K562 (cell line): ENCODE measurements at regions of chr7 and their contacts with region 1.

Region 1: DNA sequence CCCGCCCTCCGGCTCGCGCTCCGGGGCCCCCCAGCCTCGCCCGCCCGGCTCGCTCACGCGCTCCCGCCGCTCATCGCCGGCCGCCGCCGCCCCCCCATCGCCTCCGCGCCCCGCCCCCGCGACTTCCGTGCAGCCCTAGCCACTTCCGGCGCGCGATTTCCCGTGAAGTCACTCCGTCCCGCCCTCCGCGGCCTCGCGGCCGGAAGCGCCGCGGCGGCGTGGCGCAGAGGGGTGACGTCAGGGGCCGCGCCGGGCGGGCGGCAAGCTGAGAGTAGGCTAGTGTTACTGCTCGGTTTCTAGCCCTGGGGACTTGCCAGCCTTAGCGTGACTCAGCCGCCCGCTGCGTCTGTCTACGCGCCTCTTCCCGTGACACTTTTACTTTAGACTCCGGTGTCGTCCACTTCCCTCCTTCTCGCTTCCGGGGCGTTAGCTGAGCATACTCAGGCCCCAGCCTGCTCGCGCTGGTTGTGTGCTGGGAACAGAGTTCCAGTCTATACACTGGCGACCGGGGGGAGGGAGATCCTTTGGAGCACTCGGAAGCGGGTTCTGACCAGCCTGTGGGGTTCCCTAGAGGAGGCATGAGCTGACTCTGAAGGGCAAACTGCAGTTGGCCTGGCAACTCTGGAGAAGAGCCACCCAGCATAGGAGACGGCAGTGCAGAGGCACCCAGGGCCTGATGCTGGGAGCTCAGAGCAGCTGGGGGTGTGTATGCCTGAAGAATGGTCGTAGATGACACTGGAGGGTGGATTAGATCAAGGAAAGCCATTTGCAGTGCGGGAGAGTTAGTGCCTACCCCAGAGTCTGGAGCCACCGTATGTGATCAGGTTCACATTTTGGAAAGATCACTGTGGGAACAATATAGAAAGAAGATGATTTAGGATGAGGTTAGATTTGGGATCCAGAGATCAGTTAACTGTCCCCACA is at the start of gene PURB:
- DNase-seq: peak; percentile 91 to 97 (median 94)
- ATAC-seq: peak; percentile 88
- H3K4me3 ChIP-seq: peak within 1 kb of the TSS; percentile 78
- H3K27ac ChIP-seq: peak within 1 kb of the TSS; percentile 100
- H3K4me1 ChIP-seq: peaks cover 16 to 29% of the 10 kb centered on the region in 2 experiments
- H3K27me3 ChIP-seq: no peaks in the 10 kb centered on the region
- CTCF ChIP-seq: no peak
- EP300 ChIP-seq: peak; percentile 60
- POLR2A ChIP-seq: peak; percentile 98
- RAD21 ChIP-seq: no peak; a peak in 1 of 4 replicates
- polyA plus RNA-seq, gene PURB: 1.6 TPM

Region 2: DNA sequence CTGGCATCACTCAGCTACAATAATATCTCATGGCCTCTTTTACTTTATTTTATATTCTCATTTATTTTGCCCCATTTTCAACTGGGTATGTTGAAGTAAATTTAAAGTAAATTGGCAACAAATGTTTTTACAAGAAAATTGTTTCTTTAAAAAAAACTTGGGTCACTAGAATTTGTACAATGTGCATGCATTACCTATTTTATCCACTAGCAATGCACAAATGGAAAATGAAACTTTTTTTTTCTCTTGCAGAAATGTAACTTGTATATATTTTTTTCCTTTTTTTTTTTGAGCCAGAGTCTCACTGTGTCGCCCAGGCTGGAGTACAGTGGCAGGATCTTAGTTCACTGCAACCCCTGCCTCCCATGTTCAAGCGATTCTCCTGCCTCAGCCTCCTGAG is 27.5 kb before region 1 on chr7:
- CTCF ChIA-PET with region 1: no interaction called
- POLR2A ChIA-PET with region 1: interaction called, 10 read pairs
- in situ Hi-C with region 1: no loop called
- intact Hi-C with region 1: no loop called
- DNase-seq: no peak
- ATAC-seq: no peak
- H3K4me3 ChIP-seq: no peak overlapping the region
- H3K27ac ChIP-seq: no peak overlapping the region
- H3K4me1 ChIP-seq: peaks cover 0 to 4% of the 10 kb centered on the region in 2 experiments; a peak in 2 of 5 replicates
- H3K27me3 ChIP-seq: no peaks in the 10 kb centered on the region
- CTCF ChIP-seq: no peak; a peak in 1 of 6 replicates
- EP300 ChIP-seq: no peak
- POLR2A ChIP-seq: no peak
- RAD21 ChIP-seq: no peak

Region 3: GRCh38 chr7:44867073-44867995 is 18.3 kb before region 1 on chr7:
- CTCF ChIA-PET with region 1: no interaction called
- POLR2A ChIA-PET with region 1: interaction called, 18 read pairs
- in situ Hi-C with region 1: no loop called
- intact Hi-C with region 1: no loop called
- DNase-seq: peak; percentile 36 to 70 (median 48)
- ATAC-seq: peak; percentile 88
- H3K4me3 ChIP-seq: no peak overlapping the region
- H3K27ac ChIP-seq: no peak overlapping the region
- H3K4me1 ChIP-seq: peaks cover 0 to 11% of the 10 kb centered on the region in 2 experiments; a peak in 3 of 5 replicates
- H3K27me3 ChIP-seq: no peaks in the 10 kb centered on the region
- CTCF ChIP-seq: no peak
- EP300 ChIP-seq: peak; percentile 32; the same call in 1 of the 2 replicates
- POLR2A ChIP-seq: no peak
- RAD21 ChIP-seq: no peak

Region 4: GRCh38 chr7:44906965-44907364 is 21.3 kb after region 1 on chr7:
- CTCF ChIA-PET with region 1: no interaction called
- POLR2A ChIA-PET with region 1: interaction called, 14 read pairs
- in situ Hi-C with region 1: no loop called
- intact Hi-C with region 1: no loop called
- DNase-seq: no peak
- ATAC-seq: no peak
- H3K4me3 ChIP-seq: no peak overlapping the region
- H3K27ac ChIP-seq: no peak overlapping the region
- H3K4me1 ChIP-seq: peaks cover 0 to 3% of the 10 kb centered on the region in 2 experiments; a peak in 2 of 5 replicates
- H3K27me3 ChIP-seq: peaks cover 0 to 11% of the 10 kb centered on the region in 2 experiments; a peak in 2 of 5 replicates
- CTCF ChIP-seq: no peak
- EP300 ChIP-seq: no peak
- POLR2A ChIP-seq: no peak
- RAD21 ChIP-seq: no peak

Region 5: DNA sequence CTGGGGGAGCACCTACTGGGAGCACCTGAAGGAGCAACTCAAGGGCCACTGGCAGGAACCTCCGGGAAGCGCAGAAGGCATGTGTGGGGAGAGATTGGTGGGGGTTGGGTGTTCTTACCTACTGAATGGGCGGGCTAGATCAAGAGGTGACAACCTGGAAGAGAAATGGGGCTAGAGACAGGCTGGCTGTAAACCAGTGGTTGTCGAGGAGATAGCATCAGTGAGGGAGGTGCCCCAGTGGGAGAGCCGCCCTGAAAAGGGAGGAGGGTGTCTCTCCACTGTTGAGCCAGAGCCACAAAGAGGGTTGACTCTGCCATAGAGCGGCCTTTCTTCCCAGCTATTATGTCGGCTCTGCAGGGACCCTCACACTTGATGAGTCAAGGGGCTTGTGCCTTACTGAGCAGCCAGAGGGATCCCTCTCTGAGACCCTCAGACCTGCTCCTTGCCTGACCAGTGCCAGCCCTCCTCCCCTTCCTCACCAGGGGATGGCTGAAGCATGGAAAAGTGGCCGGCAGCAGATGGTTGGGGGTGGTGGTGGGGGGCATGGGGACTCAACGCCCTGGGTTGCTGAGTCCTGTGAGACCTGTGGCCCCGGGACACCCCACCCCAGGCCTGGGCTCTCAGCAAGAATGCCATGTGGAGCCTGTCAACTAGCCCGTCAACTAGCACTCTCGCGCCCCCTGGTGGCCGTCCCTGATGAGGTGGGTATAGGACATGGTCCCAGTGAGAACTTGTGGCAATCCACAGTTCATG is 36.1 kb after region 1 on chr7:
- CTCF ChIA-PET with region 1: no interaction called
- POLR2A ChIA-PET with region 1: interaction called, 4 read pairs
- in situ Hi-C with region 1: no loop called
- intact Hi-C with region 1: loop called (anchors 2 kb)
- DNase-seq: peak; percentile 82 to 91 (median 85)
- ATAC-seq: peak; percentile 98
- H3K4me3 ChIP-seq: 0 out of 2 replicates have a peak overlapping the region, but pooled peaks have one; percentile 2
- H3K27ac ChIP-seq: peak overlapping the region; percentile 51
- H3K4me1 ChIP-seq: peaks cover 7 to 13% of the 10 kb centered on the region in 2 experiments; a peak in 3 of 5 replicates
- H3K27me3 ChIP-seq: no peaks in the 10 kb centered on the region
- CTCF ChIP-seq: peak; percentile 85 to 88 (median 85)
- EP300 ChIP-seq: peak; percentile 14; the same call in 1 of the 2 replicates
- POLR2A ChIP-seq: peak; percentile 74
- RAD21 ChIP-seq: peak; percentile 90 to 91

Region 6: DNA sequence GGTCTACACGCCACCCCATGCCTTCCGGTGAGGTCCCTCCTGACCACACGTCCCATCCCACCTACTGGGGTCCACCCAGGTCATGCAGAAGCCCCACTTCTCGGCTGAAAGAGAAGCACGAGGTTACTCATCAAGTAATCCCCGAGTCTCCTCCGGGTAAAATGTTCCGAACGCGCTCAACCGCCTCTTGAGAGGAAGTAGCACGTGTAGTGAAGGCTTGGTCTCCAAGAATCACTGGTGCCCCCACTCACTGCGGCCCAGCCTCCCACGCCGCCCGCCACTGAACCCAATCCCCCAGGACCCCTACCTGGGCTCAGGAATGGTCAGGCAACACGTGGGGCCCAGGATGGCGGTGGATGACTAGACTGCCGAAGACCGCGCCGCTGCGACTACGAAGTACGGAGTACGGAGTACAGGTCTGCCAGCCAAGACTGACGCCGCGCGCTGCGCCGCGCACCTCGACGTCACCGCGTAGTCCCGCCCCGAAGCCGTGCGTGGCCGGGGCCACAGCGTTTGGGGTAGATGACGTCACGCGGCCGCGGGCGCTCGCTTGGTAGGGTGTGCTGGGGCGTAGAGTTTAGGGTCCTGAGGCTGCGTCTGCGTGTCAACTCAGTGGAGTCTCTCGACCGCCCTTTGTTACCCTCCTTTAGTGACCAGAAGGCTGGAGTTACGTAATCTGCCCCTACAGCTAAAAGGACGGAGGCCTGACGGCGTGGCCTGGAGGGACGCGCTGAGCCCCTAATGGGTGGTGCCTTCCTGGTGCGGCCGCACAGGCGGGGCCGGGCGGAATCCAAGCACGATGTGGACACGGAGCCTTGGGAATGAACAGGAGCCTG is 100.8 kb after region 1 on chr7:
- CTCF ChIA-PET with region 1: no interaction called
- POLR2A ChIA-PET with region 1: interaction called, 4 read pairs
- in situ Hi-C with region 1: no loop called
- intact Hi-C with region 1: loop called (anchors 5 kb)
- DNase-seq: peak; percentile 81 to 98 (median 86)
- ATAC-seq: peak; percentile 85
- H3K4me3 ChIP-seq: peak overlapping the region; percentile 98
- H3K27ac ChIP-seq: peak overlapping the region; percentile 97
- H3K4me1 ChIP-seq: peaks cover 22 to 38% of the 10 kb centered on the region in 2 experiments; a peak in 4 of 5 replicates
- H3K27me3 ChIP-seq: no peaks in the 10 kb centered on the region
- CTCF ChIP-seq: no peak
- EP300 ChIP-seq: no peak; the same call in none of the 2 replicates
- POLR2A ChIP-seq: peak; percentile 99
- RAD21 ChIP-seq: 0 out of 4 replicates have a peak, but pooled peaks of 1 of the 2 experiments have one; percentile 6